Activated T-helper 2 cell treated with anti-CD3 and anti-CD28 coated beads, Interferon-gamma antibody, Interleukin-2, Interleukin-4, amounts not matched to agents 10 μg/mL and 5 μg/mL and 100 μg/mL, durations not matched to agents 14 hours and 24 hours and 36 hours (primary cell): ENCODE measurements at regions of chr6 and their contacts with region 1.

Region 1: DNA sequence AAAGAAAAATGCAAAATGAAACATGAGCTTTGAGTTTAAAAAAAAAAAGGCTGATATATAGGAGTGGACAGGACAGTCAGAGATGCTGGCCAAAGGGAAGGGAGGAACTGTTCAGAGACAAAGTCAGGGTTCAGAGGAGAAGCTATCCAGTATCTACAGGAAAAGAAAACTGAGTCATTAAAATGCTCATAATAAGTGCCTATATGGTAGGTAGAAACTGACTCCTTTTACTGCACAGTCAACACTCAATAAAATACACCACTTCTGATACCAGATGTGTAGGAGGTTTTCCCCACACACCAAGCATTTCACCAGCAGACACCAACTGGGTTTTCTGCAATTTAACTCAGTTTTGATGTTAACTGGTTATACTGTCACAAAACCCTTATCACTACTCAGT is 32.9 kb downstream of the FRK start:
- DNase-seq: no peak
- H3K4me3 Mint-ChIP-seq: no peak overlapping the region
- H3K27ac Mint-ChIP-seq: no peak overlapping the region
- H3K4me1 Mint-ChIP-seq: peaks cover 10% of the 10 kb centered on the region
- H3K27me3 Mint-ChIP-seq: peaks cover 1% of the 10 kb centered on the region

Region 2: DNA sequence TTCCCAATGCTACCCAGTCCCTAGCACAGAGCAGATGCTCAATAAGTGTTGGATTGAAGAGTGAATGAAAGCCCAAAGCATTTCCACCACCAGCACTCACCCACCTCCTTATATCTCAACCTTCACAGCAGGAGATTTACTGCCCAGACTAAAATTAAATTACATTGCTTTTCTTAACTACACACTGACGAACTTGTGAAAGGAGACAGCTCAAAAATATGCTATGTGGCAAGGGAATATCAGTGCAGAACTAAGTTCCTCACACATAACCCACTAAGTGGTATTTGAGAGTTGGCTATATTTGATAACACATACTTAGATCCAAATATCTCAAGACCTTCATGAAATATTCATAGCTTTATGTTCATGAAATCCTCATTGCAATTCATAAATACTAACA is 104.8 kb before region 1 on chr6:
- intact Hi-C with region 1: no loop called
- DNase-seq: no peak
- H3K4me3 Mint-ChIP-seq: no peak overlapping the region
- H3K27ac Mint-ChIP-seq: no peak overlapping the region
- H3K4me1 Mint-ChIP-seq: no peaks in the 10 kb centered on the region
- H3K27me3 Mint-ChIP-seq: no peaks in the 10 kb centered on the region

Region 3: DNA sequence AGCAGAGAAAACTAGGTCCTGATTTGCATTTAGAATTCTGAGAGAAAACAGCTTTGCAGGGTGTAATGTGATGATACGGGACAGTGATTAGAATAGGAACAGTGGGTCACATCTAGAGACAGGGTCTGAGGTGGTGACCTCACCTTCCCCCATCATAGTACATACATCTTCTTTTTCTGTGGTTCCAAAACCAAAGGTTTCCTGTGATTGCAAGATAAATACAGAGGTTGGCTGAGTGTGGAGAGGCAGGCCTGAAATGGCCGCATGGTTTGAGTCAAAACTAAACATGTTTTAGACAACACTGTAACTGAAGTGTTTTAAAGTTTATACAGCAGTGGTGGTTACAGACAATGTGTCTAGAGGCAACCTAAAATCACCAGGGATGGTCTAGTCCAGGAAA is 62.5 kb after region 1 on chr6:
- intact Hi-C with region 1: loop called (anchors 2 kb)
- DNase-seq: peak; percentile 26
- H3K4me3 Mint-ChIP-seq: no peak overlapping the region
- H3K27ac Mint-ChIP-seq: peak overlapping the region; percentile 74
- H3K4me1 Mint-ChIP-seq: peaks cover 44% of the 10 kb centered on the region
- H3K27me3 Mint-ChIP-seq: peaks cover 2% of the 10 kb centered on the region